CD4-positive, alpha-beta memory T cell (primary cell): ENCODE measurements at regions of chr15 and their contacts with region 1.

Region 1: DNA sequence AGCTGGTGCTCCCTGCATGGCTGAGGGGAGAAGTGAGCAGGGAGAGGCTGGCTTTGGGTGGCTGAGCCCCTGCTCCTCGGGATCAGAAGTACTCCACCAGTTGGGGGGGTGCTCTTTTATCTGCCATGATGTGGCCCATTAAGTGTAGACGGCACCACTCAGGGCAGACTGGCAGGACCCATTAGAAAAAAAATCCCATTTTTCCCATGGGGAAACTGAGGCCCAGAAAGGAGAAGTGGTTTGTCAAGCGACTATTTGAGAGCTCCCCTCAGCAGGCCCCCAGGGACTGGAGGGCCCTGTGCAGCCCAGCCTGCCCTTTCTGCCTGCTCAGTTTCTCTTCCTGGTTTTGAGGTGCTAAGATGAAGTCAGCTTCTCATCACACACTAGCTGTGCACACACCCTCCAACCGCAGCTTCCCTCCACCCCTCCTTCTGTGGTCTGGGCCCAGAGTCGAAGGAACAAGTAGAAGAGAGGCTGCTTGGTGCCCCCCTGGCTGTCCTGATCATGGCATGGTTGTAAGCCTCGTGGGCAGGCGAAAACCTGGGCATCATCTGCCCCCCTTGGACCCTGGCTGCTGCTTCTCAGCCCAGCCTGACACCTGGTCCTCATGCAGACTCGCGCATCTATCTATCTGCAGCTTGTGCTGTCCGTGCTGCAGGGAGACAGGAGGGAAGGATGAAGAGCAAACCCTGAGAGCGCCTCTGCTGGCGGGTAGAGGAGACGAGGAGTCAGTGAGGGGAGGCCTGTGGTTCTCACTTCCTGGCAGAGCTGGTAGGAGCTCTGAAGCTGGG is 5.6 kb downstream of the CSK start:
- DNase-seq: peak; percentile 94 to 99 (median 96)
- H3K4me3 ChIP-seq: peak overlapping the region; percentile 55 to 69
- H3K4me3 Mint-ChIP-seq: peak overlapping the region; percentile 85 to 96 (median 92)
- H3K27ac ChIP-seq: peak overlapping the region; percentile 86
- H3K27ac Mint-ChIP-seq: peak overlapping the region; percentile 95 to 99 (median 98)
- H3K4me1 ChIP-seq: peaks cover 89% of the 10 kb centered on the region
- H3K4me1 Mint-ChIP-seq: peaks cover 39 to 97% (median 66%) of the 10 kb centered on the region in 4 donors
- H3K27me3 ChIP-seq: no peaks in the 10 kb centered on the region
- H3K27me3 Mint-ChIP-seq: no peaks in the 10 kb centered on the region

Region 2: GRCh38 chr15:74799856-74800547 is 12.6 kb after region 1 on chr15:
- CTCF ChIA-PET with region 1: interaction called, 1,908 read pairs
- POLR2A ChIA-PET with region 1: interaction called, 1,342 read pairs
- intact Hi-C with region 1: no loop called
- DNase-seq: peak; percentile 84 to 89 (median 86)
- H3K4me3 ChIP-seq: no peak overlapping the region
- H3K4me3 Mint-ChIP-seq: peak overlapping the region in 4 of 8 donors; percentile 17 to 65 (median 46)
- H3K27ac ChIP-seq: peak overlapping the region; percentile 84
- H3K27ac Mint-ChIP-seq: peak overlapping the region; percentile 83 to 97 (median 94)
- H3K4me1 ChIP-seq: peaks cover 55% of the 10 kb centered on the region
- H3K4me1 Mint-ChIP-seq: peaks cover 28 to 59% (median 45%) of the 10 kb centered on the region in 4 donors
- H3K27me3 ChIP-seq: no peaks in the 10 kb centered on the region
- H3K27me3 Mint-ChIP-seq: no peaks in the 10 kb centered on the region

Region 3: DNA sequence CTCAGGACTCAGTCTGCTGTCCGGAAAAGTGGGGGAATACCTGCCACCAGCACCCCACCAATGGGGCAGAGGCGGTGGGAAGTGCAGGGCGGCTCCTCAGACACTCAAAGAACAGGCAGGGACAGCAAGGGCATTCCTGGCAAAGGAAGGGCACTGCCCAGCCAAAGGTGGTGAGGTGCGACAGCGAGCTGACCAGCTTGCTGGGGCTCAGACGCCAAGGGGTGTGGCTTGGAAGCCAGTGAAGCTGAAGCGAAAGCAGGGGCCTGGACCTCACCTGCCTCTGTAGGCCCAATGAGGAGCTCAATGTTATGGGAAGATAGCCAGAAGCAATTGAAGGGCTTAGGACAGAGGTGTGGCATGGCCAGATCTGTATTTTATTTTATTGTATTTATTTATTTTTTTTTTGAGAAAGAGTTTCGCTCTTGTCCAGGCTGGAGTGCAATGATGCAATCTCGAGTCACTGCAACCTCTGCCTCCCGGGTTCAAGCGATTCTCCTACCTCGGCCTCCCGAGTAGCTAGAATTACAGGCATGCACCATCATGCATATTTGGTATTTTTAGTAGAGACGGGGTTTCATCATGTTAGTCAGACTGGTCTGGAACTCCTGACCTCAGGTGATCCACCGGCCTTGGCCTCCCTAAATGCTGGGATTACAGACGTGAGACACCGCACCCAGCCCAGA is 20.8 kb after region 1 on chr15:
- CTCF ChIA-PET with region 1: interaction called, 1,908 read pairs
- POLR2A ChIA-PET with region 1: interaction called, 59 read pairs
- intact Hi-C with region 1: no loop called
- DNase-seq: no peak
- H3K4me3 ChIP-seq: no peak overlapping the region
- H3K4me3 Mint-ChIP-seq: no peak overlapping the region
- H3K27ac ChIP-seq: peak overlapping the region; percentile 18
- H3K27ac Mint-ChIP-seq: peak overlapping the region; percentile 64 to 96 (median 81)
- H3K4me1 ChIP-seq: peaks cover 15% of the 10 kb centered on the region
- H3K4me1 Mint-ChIP-seq: peaks cover 22 to 40% (median 30%) of the 10 kb centered on the region in 4 donors
- H3K27me3 ChIP-seq: no peaks in the 10 kb centered on the region
- H3K27me3 Mint-ChIP-seq: no peaks in the 10 kb centered on the region

Region 4: GRCh38 chr15:74842581-74843444 is 55.4 kb after region 1 on chr15 and contains the start of gene ULK3:
- CTCF ChIA-PET with region 1: interaction called, 12 read pairs
- POLR2A ChIA-PET with region 1: interaction called, 27 read pairs
- intact Hi-C with region 1: loop called (anchors 2 kb)
- DNase-seq: peak; percentile 92 to 94 (median 93)
- H3K4me3 ChIP-seq: peak within 1 kb of the TSS; percentile 81 to 83
- H3K4me3 Mint-ChIP-seq: peak within 1 kb of the TSS; percentile 87 to 92 (median 91)
- H3K27ac ChIP-seq: peak within 1 kb of the TSS; percentile 77
- H3K27ac Mint-ChIP-seq: peak within 1 kb of the TSS; percentile 91 to 97 (median 93)
- H3K4me1 ChIP-seq: peaks cover 52% of the 10 kb centered on the region
- H3K4me1 Mint-ChIP-seq: peaks cover 37 to 57% (median 46%) of the 10 kb centered on the region in 4 donors
- H3K27me3 ChIP-seq: no peaks in the 10 kb centered on the region
- H3K27me3 Mint-ChIP-seq: no peaks in the 10 kb centered on the region
- total RNA-seq, gene ULK3: 84.9 to 88.3 TPM